Endothelial cell of umbilical vein (primary cell): ENCODE measurements at regions of chr3 and their contacts with region 1.

Region 1: GRCh38 chr3:42118762-42119361 is 27.7 kb downstream of the TRAK1 start:
- DNase-seq: peak; percentile 75
- H3K4me3 ChIP-seq: no peak overlapping the region
- H3K27ac ChIP-seq: peak overlapping the region; percentile 77
- H3K4me1 ChIP-seq: peaks cover 48% of the 10 kb centered on the region
- H3K27me3 ChIP-seq: no peaks in the 10 kb centered on the region
- CTCF ChIP-seq: peak; percentile 39 to 50
- POLR2A ChIP-seq: no peak

Region 2: DNA sequence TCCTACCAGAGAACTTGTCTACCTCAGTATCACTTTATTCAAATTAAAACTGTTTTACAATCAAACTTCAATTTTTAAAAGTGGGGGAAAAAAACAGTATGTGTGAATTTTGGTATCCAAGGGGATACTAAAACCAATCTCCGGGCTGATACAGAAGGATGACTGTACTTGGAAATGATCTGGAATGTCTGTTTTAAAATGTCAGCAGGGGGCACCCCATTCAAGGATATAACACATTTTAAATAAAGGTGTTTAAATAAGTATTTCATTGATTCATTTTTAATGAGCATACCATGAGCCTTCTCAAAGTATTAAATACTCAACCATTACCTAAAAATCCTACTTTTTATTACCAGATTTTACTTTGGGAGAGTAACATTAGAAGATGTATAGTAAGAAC is 224.9 kb before region 1 on chr3:
- CTCF ChIA-PET with region 1: no interaction called
- POLR2A ChIA-PET with region 1: no interaction called
- dilution Hi-C with region 1: no loop called
- intact Hi-C with region 1: loop called (anchors 1 kb)
- DNase-seq: peak; percentile 75
- H3K4me3 ChIP-seq: no peak overlapping the region
- H3K27ac ChIP-seq: no peak overlapping the region
- H3K4me1 ChIP-seq: no peaks in the 10 kb centered on the region
- H3K27me3 ChIP-seq: no peaks in the 10 kb centered on the region
- CTCF ChIP-seq: peak; percentile 14 to 22
- POLR2A ChIP-seq: no peak

Region 3: DNA sequence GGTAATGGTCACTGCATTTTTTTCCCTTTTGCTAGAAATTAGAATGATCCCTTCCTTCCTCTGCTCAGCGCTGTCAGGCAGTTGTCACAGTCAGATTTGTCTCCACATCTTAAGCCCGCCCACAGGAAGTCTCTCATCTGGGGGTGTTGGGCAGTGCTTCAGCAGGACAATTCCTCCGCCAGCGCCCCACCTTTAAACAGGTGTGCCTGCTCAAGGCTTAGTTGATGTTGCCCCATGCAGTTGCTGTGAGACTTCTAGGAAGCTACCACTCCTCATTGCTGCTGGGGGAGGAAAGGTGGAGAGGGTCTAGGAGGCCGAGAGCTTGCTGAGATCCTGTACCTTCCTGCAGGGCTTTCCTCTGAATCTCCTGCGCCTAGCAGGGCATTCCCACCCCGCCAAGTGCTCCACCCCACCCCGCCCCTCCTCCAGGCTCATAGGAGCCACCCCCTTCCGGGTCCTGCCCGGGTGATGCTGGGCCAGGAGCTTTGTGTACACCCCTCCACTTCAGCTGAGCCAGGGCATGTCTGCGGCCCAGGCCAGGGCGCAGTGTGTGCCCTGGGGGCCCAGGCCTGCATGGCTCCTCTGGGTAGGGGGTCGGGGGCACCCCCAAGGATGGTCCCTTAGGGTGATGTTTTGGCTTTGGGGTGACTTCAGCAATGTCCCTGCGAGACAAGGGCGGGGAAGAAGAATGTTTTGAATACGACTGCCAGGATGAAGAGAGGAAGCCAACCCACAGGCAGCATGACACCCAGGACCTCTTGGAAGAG is 41.0 kb after region 1 on chr3:
- CTCF ChIA-PET with region 1: interaction called, 4 read pairs
- POLR2A ChIA-PET with region 1: no interaction called
- dilution Hi-C with region 1: no loop called
- intact Hi-C with region 1: loop called (anchors 1 kb)
- DNase-seq: peak; percentile 36
- H3K4me3 ChIP-seq: peak overlapping the region in 1 of 3 experiments; percentile 51
- H3K27ac ChIP-seq: peak overlapping the region; percentile 85
- H3K4me1 ChIP-seq: peaks cover 34% of the 10 kb centered on the region
- H3K27me3 ChIP-seq: no peaks in the 10 kb centered on the region
- CTCF ChIP-seq: no peak
- POLR2A ChIP-seq: no peak

Region 4: GRCh38 chr3:42184651-42185443 is 66.0 kb after region 1 on chr3:
- CTCF ChIA-PET with region 1: interaction called, 318 read pairs
- POLR2A ChIA-PET with region 1: interaction called, 3 read pairs
- dilution Hi-C with region 1: no loop called
- intact Hi-C with region 1: no loop called
- DNase-seq: peak; percentile 84
- H3K4me3 ChIP-seq: no peak overlapping the region
- H3K27ac ChIP-seq: peak overlapping the region; percentile 95
- H3K4me1 ChIP-seq: peaks cover 21% of the 10 kb centered on the region
- H3K27me3 ChIP-seq: no peaks in the 10 kb centered on the region
- CTCF ChIP-seq: no peak
- POLR2A ChIP-seq: no peak

Region 5: DNA sequence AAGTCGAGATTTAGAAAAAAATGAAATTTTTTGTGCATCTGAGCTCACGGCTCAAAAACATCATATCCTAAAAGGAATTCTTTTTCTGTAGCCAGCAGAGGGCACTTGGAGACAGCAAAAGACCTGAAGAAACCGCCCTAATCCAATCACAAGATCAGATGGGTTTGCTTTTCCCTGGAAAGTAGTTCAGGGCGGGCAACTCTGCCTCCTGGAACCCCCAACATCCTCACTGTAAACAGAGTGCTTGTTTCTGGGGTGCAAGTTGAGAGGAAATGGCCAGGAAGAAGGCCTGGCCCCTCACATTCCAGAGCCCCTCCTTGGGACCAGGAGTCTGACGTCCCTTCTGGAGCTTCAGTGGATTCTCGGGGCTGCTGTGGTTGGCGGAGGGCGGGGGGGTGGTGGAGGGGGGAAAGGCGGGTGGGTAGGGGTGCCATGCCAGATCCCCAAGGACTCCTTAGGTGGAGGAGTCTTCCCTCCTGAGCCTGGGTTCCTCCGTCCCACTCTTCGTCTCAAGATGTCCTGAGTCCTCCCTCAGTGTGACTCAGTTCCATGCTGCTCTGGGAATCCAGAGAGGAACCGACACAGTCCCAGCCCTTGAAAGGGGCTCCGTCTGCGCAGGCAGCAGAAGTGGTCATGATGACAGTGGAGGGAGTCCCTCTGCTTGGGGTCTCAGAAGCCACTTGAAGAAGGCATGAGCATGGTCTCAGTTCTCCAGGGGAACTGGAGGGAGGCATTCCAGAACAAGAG is 111.3 kb after region 1 on chr3:
- CTCF ChIA-PET with region 1: interaction called, 13 read pairs
- POLR2A ChIA-PET with region 1: no interaction called
- dilution Hi-C with region 1: no loop called
- intact Hi-C with region 1: no loop called
- DNase-seq: peak; percentile 46
- H3K4me3 ChIP-seq: no peak overlapping the region
- H3K27ac ChIP-seq: no peak overlapping the region
- H3K4me1 ChIP-seq: no peaks in the 10 kb centered on the region
- H3K27me3 ChIP-seq: peaks cover 4 to 7% of the 10 kb centered on the region in 2 experiments
- CTCF ChIP-seq: peak; percentile 43 to 45
- POLR2A ChIP-seq: no peak

Region 6: GRCh38 chr3:43919029-43919428 is 1800.2 kb after region 1 on chr3:
- CTCF ChIA-PET with region 1: no interaction called
- POLR2A ChIA-PET with region 1: no interaction called
- dilution Hi-C with region 1: no loop called
- intact Hi-C with region 1: no loop called
- DNase-seq: peak; percentile 33
- H3K4me3 ChIP-seq: no peak overlapping the region
- H3K27ac ChIP-seq: no peak overlapping the region
- H3K4me1 ChIP-seq: no peaks in the 10 kb centered on the region
- H3K27me3 ChIP-seq: peaks cover 9 to 24% of the 10 kb centered on the region in 2 experiments
- CTCF ChIP-seq: no peak
- POLR2A ChIP-seq: no peak